ENCODE measurements at regions of chr3 and their contacts with region 1.

Region 1: DNA sequence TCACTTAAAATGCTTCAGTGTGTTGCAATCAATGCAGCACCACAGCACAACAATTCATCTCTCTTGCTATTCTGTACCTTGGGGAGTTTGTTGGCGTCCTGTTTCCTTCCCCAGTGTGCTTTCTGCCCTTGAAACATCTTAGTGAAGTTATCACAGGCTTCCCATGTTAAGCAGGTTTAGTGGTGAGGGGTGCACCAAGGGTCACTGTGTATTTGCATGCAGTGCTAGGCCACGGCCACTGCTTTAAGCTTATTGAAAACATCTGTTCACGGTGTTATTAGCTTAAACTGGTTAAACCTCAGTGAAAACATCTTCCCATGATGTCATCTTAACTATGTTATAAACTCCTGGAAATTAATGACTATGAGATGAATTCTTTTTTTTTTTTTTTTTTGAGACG is 217.3 kb upstream of the GOLIM4 start:
- DNase-seq: no peak
- H3K4me3 ChIP-seq: no peak overlapping the region
- H3K27ac ChIP-seq: no peak overlapping the region
- H3K4me1 ChIP-seq: no peaks in the 10 kb centered on the region
- H3K27me3 ChIP-seq: no peaks in the 10 kb centered on the region
- CTCF ChIP-seq: no peak

Region 2: GRCh38 chr3:168341192-168341815 is 28.3 kb after region 1 on chr3:
- CTCF ChIA-PET with region 1: no interaction called
- dilution Hi-C with region 1: loop called (anchors 5 kb)
- in situ Hi-C with region 1: no loop called
- intact Hi-C with region 1: no loop called
- DNase-seq: no peak
- H3K4me3 ChIP-seq: no peak overlapping the region
- H3K27ac ChIP-seq: no peak overlapping the region
- H3K4me1 ChIP-seq: no peaks in the 10 kb centered on the region
- H3K27me3 ChIP-seq: no peaks in the 10 kb centered on the region
- CTCF ChIP-seq: no peak

Measured in mammary epithelial cell (primary cell).